Panc1 (cell line): ENCODE measurements at regions of chr10 and their contacts with region 1.

Region 1: DNA sequence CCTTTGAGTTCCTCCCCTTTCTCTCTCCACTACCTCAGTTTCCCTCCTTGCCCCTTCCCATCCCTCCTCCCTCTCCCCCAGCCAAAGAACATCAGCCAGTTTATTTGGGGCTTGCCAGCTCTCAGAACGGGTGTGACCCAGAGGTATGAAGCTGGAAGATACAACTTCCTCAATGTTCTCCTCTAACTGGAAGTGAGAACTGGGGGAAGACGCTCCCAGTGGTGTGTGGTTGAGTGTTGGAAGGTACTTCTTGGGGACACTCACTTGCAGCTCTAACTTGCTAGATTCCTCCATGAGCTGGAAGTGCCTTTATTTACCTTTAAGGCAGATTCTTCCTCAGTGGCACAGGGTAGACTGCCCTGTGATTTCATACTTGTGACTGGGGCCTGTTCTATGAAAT is 110.5 kb upstream of the HABP2 start:
- DNase-seq: no peak
- ATAC-seq: no peak
- H3K4me3 ChIP-seq: no peak overlapping the region
- H3K27ac ChIP-seq: no peak overlapping the region
- H3K4me1 ChIP-seq: no peaks in the 10 kb centered on the region
- H3K27me3 ChIP-seq: peaks cover 29% of the 10 kb centered on the region
- CTCF ChIP-seq: no peak

Region 2: DNA sequence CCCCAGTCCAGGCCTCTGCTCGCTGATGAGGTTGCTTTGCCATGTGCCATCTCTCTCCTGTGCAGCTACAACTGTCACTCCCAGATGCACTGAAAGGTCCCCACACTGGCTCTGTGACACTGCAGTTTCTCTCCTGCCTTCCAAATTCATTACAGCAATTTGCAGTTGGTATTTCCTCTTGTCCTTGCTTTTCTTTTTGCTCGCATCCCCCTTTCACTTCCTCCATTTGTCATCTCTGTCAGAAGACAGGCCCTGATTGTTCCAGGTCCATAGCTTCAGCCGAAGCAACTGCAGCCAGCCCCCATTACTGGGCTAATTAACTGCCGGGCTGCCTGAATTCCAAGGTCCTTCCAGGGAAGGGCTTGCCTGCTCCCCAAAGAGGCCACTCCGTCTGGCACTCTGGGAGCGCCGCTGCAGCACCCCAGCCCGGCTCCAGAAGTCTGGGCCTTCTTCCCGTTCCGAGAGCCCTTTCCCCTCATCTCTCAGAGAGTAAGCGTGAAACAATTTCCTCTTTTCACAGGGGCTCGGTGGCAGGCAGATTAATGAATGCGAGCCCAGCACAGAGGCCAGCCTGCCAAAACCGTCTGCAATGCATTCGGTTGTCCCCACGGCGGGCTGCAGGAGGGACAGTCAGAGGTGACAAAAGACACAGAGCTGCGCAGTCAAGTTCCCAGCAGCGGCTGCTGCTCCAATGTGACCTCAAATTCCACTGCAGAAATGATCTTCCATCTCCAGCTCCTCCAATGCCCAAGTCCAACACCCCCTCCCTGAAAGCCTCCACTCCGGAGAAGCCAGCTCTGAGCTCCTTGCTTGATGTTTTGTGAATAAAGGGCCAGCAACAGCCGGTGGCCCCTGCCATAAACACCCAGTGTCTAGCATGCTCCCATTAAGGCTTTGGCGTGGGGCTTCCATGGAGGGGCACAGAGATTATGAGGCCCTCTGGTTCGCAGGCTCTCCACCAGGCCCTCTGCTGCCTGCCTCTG is 168.9 kb before region 1 on chr10:
- CTCF ChIA-PET with region 1: no interaction called
- POLR2A ChIA-PET with region 1: no interaction called
- in situ Hi-C with region 1: no loop called
- intact Hi-C with region 1: no loop called
- DNase-seq: no peak
- ATAC-seq: no peak; the same call in 1 of the 2 replicates
- H3K4me3 ChIP-seq: no peak overlapping the region
- H3K27ac ChIP-seq: no peak overlapping the region
- H3K4me1 ChIP-seq: no peaks in the 10 kb centered on the region
- H3K27me3 ChIP-seq: no peaks in the 10 kb centered on the region; the same call in 1 of the 2 replicates
- CTCF ChIP-seq: no peak

Region 3: GRCh38 chr10:113539789-113540188 is 97.5 kb after region 1 on chr10:
- CTCF ChIA-PET with region 1: interaction called, 11 read pairs
- POLR2A ChIA-PET with region 1: no interaction called
- in situ Hi-C with region 1: no loop called
- intact Hi-C with region 1: no loop called
- DNase-seq: no peak
- ATAC-seq: no peak
- H3K4me3 ChIP-seq: no peak overlapping the region
- H3K27ac ChIP-seq: no peak overlapping the region
- H3K4me1 ChIP-seq: no peaks in the 10 kb centered on the region
- H3K27me3 ChIP-seq: peaks cover 20% of the 10 kb centered on the region
- CTCF ChIP-seq: no peak